OCI-LY7 (cell line): ENCODE measurements at regions of chr20 and their contacts with region 1.

Region 1: DNA sequence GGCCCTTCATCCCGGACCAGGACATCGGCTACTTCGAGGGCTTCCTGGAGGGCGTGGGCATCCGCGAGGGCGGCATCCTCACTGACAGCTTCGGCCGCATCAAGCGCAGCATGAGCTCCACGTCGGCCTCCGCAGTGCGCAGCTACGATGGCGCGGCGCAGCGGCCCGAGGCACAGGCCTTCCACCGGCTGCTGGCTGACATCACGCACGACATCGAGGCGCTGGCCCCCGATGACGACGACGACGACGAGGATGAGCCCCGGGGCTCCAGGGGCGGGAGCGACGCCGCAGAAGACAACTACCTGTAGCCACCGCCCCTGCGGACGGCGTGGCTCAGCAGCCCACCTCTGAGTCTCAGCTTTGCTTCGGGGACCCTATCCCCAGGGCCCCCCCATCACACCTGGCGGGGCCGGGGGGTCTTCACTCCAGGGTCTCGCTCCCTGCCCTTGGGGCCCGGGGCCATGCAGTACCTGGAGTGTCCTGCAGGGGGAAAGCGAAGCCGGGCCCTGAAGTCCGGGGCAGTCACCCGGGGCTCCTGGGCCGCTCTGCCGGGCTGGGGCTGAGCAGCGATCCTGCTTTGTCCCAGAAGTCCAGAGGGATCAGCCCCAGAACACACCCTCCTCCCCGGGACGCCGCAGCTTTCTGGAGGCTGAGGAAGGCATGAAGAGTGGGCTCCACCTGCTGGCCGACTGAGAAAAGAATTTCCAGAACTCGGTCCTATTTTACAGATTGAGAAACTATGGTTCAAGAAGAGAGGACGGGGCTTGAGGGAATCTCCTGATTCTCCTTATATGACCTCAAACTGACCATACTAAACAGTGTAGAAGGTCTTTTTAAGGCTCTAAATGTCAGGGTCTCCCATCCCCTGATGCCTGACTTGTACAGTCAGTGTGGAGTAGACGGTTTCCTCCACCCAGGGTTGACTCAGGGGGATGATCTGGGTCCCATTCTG is 20.8 kb upstream of the HCK start:
- DNase-seq: peak; percentile 66
- H3K4me3 ChIP-seq: peak overlapping the region; percentile 51
- H3K27ac ChIP-seq: no peak overlapping the region
- H3K4me1 ChIP-seq: peaks cover 32% of the 10 kb centered on the region
- CTCF ChIP-seq: peak; percentile 98

Region 2: DNA sequence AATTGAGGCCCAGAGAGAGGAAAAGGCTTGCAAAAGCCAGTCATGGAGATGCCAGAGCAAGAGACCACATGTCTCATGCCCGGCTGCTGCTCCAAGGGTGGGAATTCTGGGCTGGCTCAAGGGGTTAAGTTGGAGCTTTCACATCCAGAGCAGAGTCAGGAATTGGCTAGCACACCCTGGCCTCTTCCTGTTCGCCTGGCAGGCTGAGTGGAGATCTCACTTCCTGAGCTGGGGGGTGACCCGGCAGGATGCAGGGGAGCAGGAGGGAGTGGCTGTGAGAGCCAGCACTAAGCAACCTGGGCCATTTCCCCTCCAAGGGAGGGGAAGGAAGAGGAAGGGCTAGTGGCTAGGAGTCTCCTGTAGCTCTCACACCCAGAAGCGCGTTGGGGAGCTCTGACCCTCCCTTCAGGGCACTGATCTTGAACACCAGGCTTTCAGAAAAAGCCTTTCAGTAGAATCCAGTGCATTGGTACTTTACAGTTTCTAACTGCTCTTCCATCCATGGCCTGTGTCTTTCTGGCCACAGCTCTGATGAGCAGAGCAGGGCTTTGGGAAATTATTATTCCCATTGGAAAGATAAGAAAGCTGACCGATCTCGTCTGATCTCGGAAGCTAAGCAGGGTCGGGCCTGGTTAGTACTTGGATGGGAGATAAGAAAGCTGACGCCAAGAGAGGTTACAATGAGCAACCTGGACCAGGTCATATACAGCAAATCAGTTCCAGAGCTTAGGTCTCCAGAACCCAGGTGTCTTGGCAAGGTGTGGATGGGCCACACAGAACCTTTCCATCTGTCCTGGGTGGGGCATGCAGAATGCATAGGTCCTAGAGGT is 23.3 kb before region 1 on chr20:
- CTCF ChIA-PET with region 1: no interaction called
- POLR2A ChIA-PET with region 1: no interaction called
- intact Hi-C with region 1: no loop called
- DNase-seq: no peak
- H3K4me3 ChIP-seq: no peak overlapping the region
- H3K27ac ChIP-seq: no peak overlapping the region
- H3K4me1 ChIP-seq: no peaks in the 10 kb centered on the region
- CTCF ChIP-seq: no peak

Region 3: GRCh38 chr20:32091888-32092346 is 60.6 kb after region 1 on chr20:
- CTCF ChIA-PET with region 1: interaction called, 40 read pairs
- POLR2A ChIA-PET with region 1: interaction called, 34 read pairs
- intact Hi-C with region 1: loop called (anchors 1 kb)
- DNase-seq: peak; percentile 83
- H3K4me3 ChIP-seq: no peak overlapping the region
- H3K27ac ChIP-seq: no peak overlapping the region
- H3K4me1 ChIP-seq: peaks cover 11% of the 10 kb centered on the region
- CTCF ChIP-seq: peak; percentile 95